Activated CD8-positive, alpha-beta memory T cell treated with anti-CD3 and anti-CD28 coated beads, Interleukin-2, amount 10 ng/mL, durations not matched to agents 7 days and 5 days (primary cell): ENCODE measurements at regions of chr14 and their contacts with region 1.

Region 1: GRCh38 chr14:63770187-63770807 is 42.4 kb upstream of the SGPP1 start:
- DNase-seq: peak; percentile 67
- ATAC-seq: peak; percentile 84
- H3K4me3 Mint-ChIP-seq: no peak overlapping the region
- H3K27ac Mint-ChIP-seq: no peak overlapping the region
- H3K4me1 Mint-ChIP-seq: peaks cover 9% of the 10 kb centered on the region
- H3K27me3 Mint-ChIP-seq: no peaks in the 10 kb centered on the region

Region 2: GRCh38 chr14:63388763-63389431 is 381.4 kb before region 1 on chr14:
- CTCF ChIA-PET with region 1: interaction called, 24 read pairs
- DNase-seq: peak; percentile 78
- ATAC-seq: peak; percentile 80
- H3K4me3 Mint-ChIP-seq: no peak overlapping the region
- H3K27ac Mint-ChIP-seq: peak overlapping the region; percentile 59
- H3K4me1 Mint-ChIP-seq: peaks cover 10% of the 10 kb centered on the region
- H3K27me3 Mint-ChIP-seq: no peaks in the 10 kb centered on the region

Region 3: GRCh38 chr14:63632932-63633514 is 137.3 kb before region 1 on chr14:
- CTCF ChIA-PET with region 1: interaction called, 27 read pairs
- DNase-seq: no peak
- ATAC-seq: peak; percentile 78
- H3K4me3 Mint-ChIP-seq: no peak overlapping the region
- H3K27ac Mint-ChIP-seq: no peak overlapping the region
- H3K4me1 Mint-ChIP-seq: peaks cover 22% of the 10 kb centered on the region
- H3K27me3 Mint-ChIP-seq: no peaks in the 10 kb centered on the region

Region 4: GRCh38 chr14:63641473-63642228 is 128.6 kb before region 1 on chr14 and contains the start of gene WDR89:
- CTCF ChIA-PET with region 1: interaction called, 16 read pairs
- DNase-seq: peak; percentile 99
- ATAC-seq: peak; percentile 93
- H3K4me3 Mint-ChIP-seq: peak within 1 kb of the TSS; percentile 85
- H3K27ac Mint-ChIP-seq: peak within 1 kb of the TSS; percentile 93
- H3K4me1 Mint-ChIP-seq: peaks cover 36% of the 10 kb centered on the region
- H3K27me3 Mint-ChIP-seq: no peaks in the 10 kb centered on the region
- total RNA-seq, gene WDR89: 19.5 to 26.0 TPM

Region 5: DNA sequence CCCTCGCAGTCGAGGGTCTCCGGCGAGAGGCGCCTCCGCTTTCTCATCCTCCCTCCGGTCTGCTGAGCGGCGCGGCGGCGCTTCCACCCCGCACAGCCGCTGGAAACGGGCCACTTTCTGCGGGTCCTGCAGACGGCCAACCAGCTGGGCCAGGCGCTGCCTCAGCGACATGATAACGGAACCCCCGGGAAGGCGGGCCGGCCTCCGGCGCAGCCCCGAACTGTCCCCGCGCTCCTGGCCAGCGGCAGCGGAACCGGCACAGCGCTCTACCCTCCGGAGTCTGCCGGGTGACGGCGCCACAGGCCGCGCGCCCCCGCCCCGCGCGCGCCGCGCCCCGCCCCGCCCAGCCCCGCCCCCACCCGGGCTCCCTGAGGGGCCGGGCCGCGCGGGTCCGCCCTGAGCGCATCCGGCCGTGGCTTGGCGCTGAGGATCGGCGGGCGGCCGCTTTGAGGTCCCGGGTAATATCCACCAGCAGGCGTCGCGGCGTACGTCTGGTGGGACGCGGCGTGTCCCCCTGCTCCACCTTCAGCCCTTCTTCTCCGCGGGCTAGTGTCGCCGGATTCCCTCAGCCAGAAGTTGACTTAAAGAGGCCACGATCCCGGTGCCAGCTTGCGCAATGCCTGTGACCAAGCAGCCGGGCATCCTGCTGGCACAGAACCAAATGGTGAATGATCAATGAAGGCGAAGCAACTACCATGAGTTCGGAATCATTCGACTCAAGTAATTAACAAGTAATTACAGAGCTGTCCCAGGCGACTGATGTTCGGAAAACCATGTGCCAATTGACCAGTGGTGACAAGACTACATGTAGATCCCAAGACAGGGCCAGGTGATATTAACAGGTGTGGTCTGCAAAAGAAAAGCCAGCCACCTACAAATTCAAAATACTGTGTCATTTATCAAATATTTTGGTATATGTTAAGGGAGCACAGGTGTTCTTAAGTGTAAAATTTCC is 42.2 kb before region 1 on chr14 and contains the start of gene SGPP1:
- CTCF ChIA-PET with region 1: interaction called, 12 read pairs
- DNase-seq: peak; percentile 90
- ATAC-seq: peak; percentile 96
- H3K4me3 Mint-ChIP-seq: peak within 1 kb of the TSS; percentile 98
- H3K27ac Mint-ChIP-seq: peak within 1 kb of the TSS; percentile 96
- H3K4me1 Mint-ChIP-seq: peaks cover 31% of the 10 kb centered on the region
- H3K27me3 Mint-ChIP-seq: peaks cover 14% of the 10 kb centered on the region
- total RNA-seq, gene SGPP1: 16.5 to 17.4 TPM

Region 6: GRCh38 chr14:63737582-63738006 is 32.7 kb before region 1 on chr14:
- CTCF ChIA-PET with region 1: interaction called, 17 read pairs
- DNase-seq: no peak
- ATAC-seq: peak; percentile 92
- H3K4me3 Mint-ChIP-seq: peak overlapping the region; percentile 43
- H3K27ac Mint-ChIP-seq: peak overlapping the region; percentile 83
- H3K4me1 Mint-ChIP-seq: peaks cover 15% of the 10 kb centered on the region
- H3K27me3 Mint-ChIP-seq: peaks cover 6% of the 10 kb centered on the region

Region 7: DNA sequence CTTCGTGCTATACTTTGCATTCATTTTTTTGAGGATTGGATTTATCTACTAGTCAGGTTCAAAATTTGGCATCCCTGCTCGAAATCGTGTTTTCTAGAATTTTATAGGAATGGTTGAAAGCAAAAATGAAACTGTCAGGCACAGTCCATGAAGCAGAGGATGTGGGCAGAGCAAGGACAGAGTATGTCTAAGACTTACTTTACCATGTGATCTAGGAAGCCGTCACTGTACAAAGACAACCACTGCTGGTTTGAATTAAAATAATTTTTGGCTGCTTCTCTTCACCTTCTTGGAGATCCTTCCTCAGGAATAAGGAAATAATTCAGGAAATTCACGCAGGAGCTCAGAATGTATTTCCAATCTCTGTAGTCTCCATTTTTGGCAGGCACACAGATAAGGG is 10.8 kb before region 1 on chr14:
- CTCF ChIA-PET with region 1: interaction called, 20 read pairs
- DNase-seq: peak; percentile 65
- ATAC-seq: peak; percentile 98
- H3K4me3 Mint-ChIP-seq: peak overlapping the region; percentile 65
- H3K27ac Mint-ChIP-seq: peak overlapping the region; percentile 91
- H3K4me1 Mint-ChIP-seq: peaks cover 15% of the 10 kb centered on the region
- H3K27me3 Mint-ChIP-seq: no peaks in the 10 kb centered on the region